ENCODE measurements at regions of chr17 and their contacts with region 1.

Region 1: GRCh38 chr17:78840725-78841611 is at the start of gene USP36:
- DNase-seq: peak; percentile 99
- ATAC-seq: peak; percentile 90
- H3K4me3 Mint-ChIP-seq: peak within 1 kb of the TSS; percentile 84
- H3K27ac Mint-ChIP-seq: peak within 1 kb of the TSS; percentile 87
- H3K4me1 Mint-ChIP-seq: peaks cover 21% of the 10 kb centered on the region
- H3K27me3 Mint-ChIP-seq: no peaks in the 10 kb centered on the region
- CTCF ChIP-seq: no peak
- total RNA-seq, gene USP36: 62.0 to 74.0 TPM (median 65.8 TPM) in 3 replicates

Region 2: DNA sequence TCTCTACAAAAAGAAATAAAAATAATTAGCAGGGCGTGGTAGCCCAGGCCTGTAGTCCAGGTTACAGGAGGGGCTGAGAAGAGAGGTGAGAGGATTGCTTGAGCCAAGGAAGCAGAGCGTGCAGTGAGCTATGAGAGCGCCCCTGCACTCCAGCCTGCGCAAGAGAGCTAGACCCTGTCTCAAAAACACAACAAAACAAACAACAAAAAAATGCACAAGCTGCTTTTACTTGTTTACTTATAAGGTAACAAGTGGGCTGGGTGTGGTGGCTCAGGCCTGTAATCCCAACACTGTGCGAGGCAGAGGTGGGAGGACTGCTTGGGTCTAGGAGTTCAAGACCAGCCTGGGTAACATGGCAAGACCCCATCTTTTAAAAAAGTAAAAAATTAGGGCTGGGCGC is 60.6 kb before region 1 on chr17:
- CTCF ChIA-PET with region 1: no interaction called
- POLR2A ChIA-PET with region 1: no interaction called
- DNase-seq: no peak
- ATAC-seq: no peak
- H3K4me3 Mint-ChIP-seq: peak overlapping the region; percentile 37
- H3K27ac Mint-ChIP-seq: no peak overlapping the region
- H3K4me1 Mint-ChIP-seq: peaks cover 19% of the 10 kb centered on the region
- H3K27me3 Mint-ChIP-seq: peaks cover 3% of the 10 kb centered on the region; the same call in 1 of the 2 replicates
- CTCF ChIP-seq: no peak

Region 3: GRCh38 chr17:78852709-78853121 is 11.7 kb after region 1 on chr17:
- CTCF ChIA-PET with region 1: interaction called, 27 read pairs
- POLR2A ChIA-PET with region 1: no interaction called
- DNase-seq: peak; percentile 52
- ATAC-seq: peak; percentile 69
- H3K4me3 Mint-ChIP-seq: no peak overlapping the region
- H3K27ac Mint-ChIP-seq: peak overlapping the region; percentile 3; the same call in 1 of the 2 replicates
- H3K4me1 Mint-ChIP-seq: peaks cover 2% of the 10 kb centered on the region; the same call in 1 of the 2 replicates
- H3K27me3 Mint-ChIP-seq: no peaks in the 10 kb centered on the region
- CTCF ChIP-seq: no peak

Region 4: GRCh38 chr17:78892520-78892919 is 51.6 kb after region 1 on chr17:
- CTCF ChIA-PET with region 1: interaction called, 4 read pairs
- POLR2A ChIA-PET with region 1: interaction called, 11 read pairs
- DNase-seq: no peak
- ATAC-seq: no peak
- H3K4me3 Mint-ChIP-seq: no peak overlapping the region
- H3K27ac Mint-ChIP-seq: peak overlapping the region; percentile 46; the same call in 1 of the 2 replicates
- H3K4me1 Mint-ChIP-seq: no peaks in the 10 kb centered on the region
- H3K27me3 Mint-ChIP-seq: no peaks in the 10 kb centered on the region
- CTCF ChIP-seq: no peak